ENCODE measurements at regions of chr4 and their contacts with region 1.

Region 1: GRCh38 chr4:55395529-55396307 is at the start of gene TMEM165:
- DNase-seq: peak; percentile 77 to 92 (median 87)
- ATAC-seq: peak; percentile 94
- H3K4me3 ChIP-seq: peak within 1 kb of the TSS; percentile 88
- H3K4me3 Mint-ChIP-seq: peak within 1 kb of the TSS; percentile 94 to 99 (median 96)
- H3K27ac ChIP-seq: peak within 1 kb of the TSS; percentile 89
- H3K27ac Mint-ChIP-seq: peak within 1 kb of the TSS; percentile 89 to 99 (median 96)
- H3K4me1 ChIP-seq: peaks cover 27 to 31% of the 10 kb centered on the region in 2 donors
- H3K4me1 Mint-ChIP-seq: peaks cover 29 to 49% (median 39%) of the 10 kb centered on the region in 7 donors
- H3K27me3 ChIP-seq: no peaks in the 10 kb centered on the region
- H3K27me3 Mint-ChIP-seq: no peaks in the 10 kb centered on the region
- total RNA-seq, gene TMEM165: 53.1 to 80.9 (median 58.9) TPM

Region 2: GRCh38 chr4:54064295-54065111 is 1331.2 kb before region 1 on chr4 and contains the start of gene CHIC2:
- CTCF ChIA-PET with region 1: no interaction called
- POLR2A ChIA-PET with region 1: no interaction called
- intact Hi-C with region 1: loop called in 1 of 2 experiments (anchors 5 kb)
- DNase-seq: peak; percentile 95 to 99 (median 98)
- ATAC-seq: peak; percentile 94
- H3K4me3 ChIP-seq: peak within 1 kb of the TSS; percentile 77
- H3K4me3 Mint-ChIP-seq: peak within 1 kb of the TSS; percentile 94 to 100 (median 97)
- H3K27ac ChIP-seq: peak within 1 kb of the TSS; percentile 100
- H3K27ac Mint-ChIP-seq: peak within 1 kb of the TSS; percentile 95 to 99 (median 98)
- H3K4me1 ChIP-seq: peaks cover 8 to 32% of the 10 kb centered on the region in 2 donors
- H3K4me1 Mint-ChIP-seq: peaks cover 39 to 59% (median 44%) of the 10 kb centered on the region in 7 donors
- H3K27me3 ChIP-seq: no peaks in the 10 kb centered on the region
- H3K27me3 Mint-ChIP-seq: peaks cover 0 to 2% (median 0%) of the 10 kb centered on the region in 5 donors
- total RNA-seq, gene CHIC2: 22.4 to 55.7 (median 40.7) TPM

Region 3: GRCh38 chr4:55352726-55353125 is 43.0 kb before region 1 on chr4:
- CTCF ChIA-PET with region 1: no interaction called
- POLR2A ChIA-PET with region 1: no interaction called
- intact Hi-C with region 1: no loop called
- DNase-seq: no peak
- ATAC-seq: no peak
- H3K4me3 ChIP-seq: no peak overlapping the region
- H3K4me3 Mint-ChIP-seq: no peak overlapping the region
- H3K27ac ChIP-seq: no peak overlapping the region
- H3K27ac Mint-ChIP-seq: no peak overlapping the region
- H3K4me1 ChIP-seq: no peaks in the 10 kb centered on the region
- H3K4me1 Mint-ChIP-seq: peaks cover 0 to 7% (median 6%) of the 10 kb centered on the region in 7 donors
- H3K27me3 ChIP-seq: no peaks in the 10 kb centered on the region
- H3K27me3 Mint-ChIP-seq: no peaks in the 10 kb centered on the region

Region 4: DNA sequence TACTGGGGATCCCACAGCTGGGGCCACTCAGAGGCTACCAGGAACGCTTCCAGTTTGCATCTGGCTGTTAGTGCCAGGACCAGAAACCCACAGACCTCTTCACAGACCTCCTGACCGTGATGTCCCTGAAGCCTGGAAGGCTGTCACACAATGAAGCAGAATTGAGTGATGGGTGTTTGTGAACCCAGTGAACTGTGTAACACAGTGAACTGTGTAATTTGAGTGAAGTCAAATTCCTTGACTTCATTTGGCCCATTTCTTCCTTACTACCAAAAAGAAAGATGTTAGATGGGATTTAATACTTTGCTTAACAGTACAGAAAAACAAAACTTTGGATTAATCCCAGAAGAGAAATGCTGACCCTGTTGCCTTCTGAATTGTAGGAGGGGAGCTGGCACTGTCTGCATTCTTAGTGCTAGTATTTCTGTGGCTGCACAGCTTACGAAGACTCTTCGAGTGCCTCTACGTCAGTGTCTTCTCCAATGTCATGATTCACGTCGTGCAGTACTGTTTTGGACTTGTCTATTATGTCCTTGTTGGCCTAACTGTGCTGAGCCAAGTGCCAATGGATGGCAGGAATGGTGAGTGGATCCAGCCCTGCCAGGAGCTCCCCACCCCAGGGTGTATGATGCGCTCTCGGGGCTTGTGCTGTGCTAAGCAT is 31.9 kb before region 1 on chr4:
- CTCF ChIA-PET with region 1: no interaction called
- POLR2A ChIA-PET with region 1: no interaction called
- intact Hi-C with region 1: loop called in 1 of 2 experiments (anchors 5 kb)
- DNase-seq: no peak
- ATAC-seq: no peak
- H3K4me3 ChIP-seq: no peak overlapping the region
- H3K4me3 Mint-ChIP-seq: no peak overlapping the region
- H3K27ac ChIP-seq: no peak overlapping the region
- H3K27ac Mint-ChIP-seq: no peak overlapping the region
- H3K4me1 ChIP-seq: no peaks in the 10 kb centered on the region
- H3K4me1 Mint-ChIP-seq: peaks cover 0 to 8% (median 0%) of the 10 kb centered on the region in 7 donors
- H3K27me3 ChIP-seq: no peaks in the 10 kb centered on the region
- H3K27me3 Mint-ChIP-seq: no peaks in the 10 kb centered on the region

Region 5: GRCh38 chr4:55546756-55547465 is 151.2 kb after region 1 on chr4 and contains the start of gene CLOCK:
- CTCF ChIA-PET with region 1: no interaction called
- POLR2A ChIA-PET with region 1: interaction called, 13 read pairs
- intact Hi-C with region 1: loop called (anchors 1 kb)
- DNase-seq: peak; percentile 79 to 87 (median 83)
- ATAC-seq: peak; percentile 82
- H3K4me3 ChIP-seq: peak within 1 kb of the TSS; percentile 82
- H3K4me3 Mint-ChIP-seq: peak within 1 kb of the TSS; percentile 88 to 96 (median 94)
- H3K27ac ChIP-seq: peak within 1 kb of the TSS; percentile 84
- H3K27ac Mint-ChIP-seq: peak within 1 kb of the TSS; percentile 87 to 92 (median 90)
- H3K4me1 ChIP-seq: peaks cover 5 to 8% of the 10 kb centered on the region in 2 donors
- H3K4me1 Mint-ChIP-seq: peaks cover 21 to 57% (median 40%) of the 10 kb centered on the region in 7 donors
- H3K27me3 ChIP-seq: no peaks in the 10 kb centered on the region
- H3K27me3 Mint-ChIP-seq: peaks cover 0 to 29% (median 0%) of the 10 kb centered on the region in 5 donors
- total RNA-seq, gene CLOCK: 7.9 to 12.6 (median 8.9) TPM

Region 6: GRCh38 chr4:56048702-56049431 is 653.1 kb after region 1 on chr4:
- CTCF ChIA-PET with region 1: no interaction called
- POLR2A ChIA-PET with region 1: no interaction called
- intact Hi-C with region 1: loop called in 1 of 2 experiments (anchors 5 kb)
- DNase-seq: peak in 6 of 9 donors; percentile 7 to 72 (median 16)
- ATAC-seq: peak; percentile 85
- H3K4me3 ChIP-seq: no peak overlapping the region
- H3K4me3 Mint-ChIP-seq: peak overlapping the region; percentile 55 to 78 (median 73)
- H3K27ac ChIP-seq: no peak overlapping the region
- H3K27ac Mint-ChIP-seq: no peak overlapping the region
- H3K4me1 ChIP-seq: peaks cover 3 to 6% of the 10 kb centered on the region in 2 donors
- H3K4me1 Mint-ChIP-seq: peaks cover 8 to 18% (median 12%) of the 10 kb centered on the region in 7 donors
- H3K27me3 ChIP-seq: peaks cover 6 to 10% of the 10 kb centered on the region in 2 donors
- H3K27me3 Mint-ChIP-seq: peaks cover 43 to 64% (median 55%) of the 10 kb centered on the region in 5 donors

Region 7: DNA sequence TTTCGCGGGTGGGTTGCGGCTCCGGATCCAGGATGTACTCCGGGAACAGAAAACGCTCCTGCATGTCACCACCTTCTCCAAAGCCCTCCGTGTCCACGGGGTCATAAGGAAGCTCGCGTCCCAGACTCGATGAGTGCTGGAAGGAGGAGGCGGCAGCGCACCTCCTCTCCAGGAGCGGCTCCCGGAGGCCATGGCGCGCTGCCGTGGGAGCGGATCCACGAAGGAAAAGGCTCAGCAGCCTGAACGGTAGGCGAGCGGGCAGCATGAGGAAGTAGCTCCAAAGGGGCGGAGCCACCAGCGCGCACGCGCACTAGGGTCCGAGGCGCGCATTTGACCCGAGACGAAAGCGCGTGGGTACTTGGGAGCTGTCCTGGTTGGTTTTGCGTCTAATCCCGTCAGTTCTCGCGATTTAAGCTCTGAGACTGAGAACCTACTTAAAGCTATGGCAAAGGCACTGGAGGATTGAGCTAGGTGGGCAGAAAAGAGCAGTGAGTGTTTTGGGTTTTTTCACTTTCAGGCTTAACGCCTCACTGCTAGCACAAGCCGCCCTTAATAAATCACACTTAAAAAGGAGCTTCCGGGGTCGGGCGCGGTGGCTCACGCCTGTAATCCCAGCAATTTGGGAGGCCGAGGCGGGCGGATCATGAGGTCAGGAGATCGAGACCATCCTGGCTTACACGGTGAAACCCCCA is 1581.7 kb after region 1 on chr4 and contains the start of gene NOA1:
- CTCF ChIA-PET with region 1: no interaction called
- POLR2A ChIA-PET with region 1: no interaction called
- intact Hi-C with region 1: loop called (anchors 1 to 5 kb)
- DNase-seq: peak; percentile 98 to 99 (median 99)
- ATAC-seq: peak; percentile 86
- H3K4me3 ChIP-seq: peak within 1 kb of the TSS; percentile 80
- H3K4me3 Mint-ChIP-seq: peak within 1 kb of the TSS; percentile 92 to 100 (median 98)
- H3K27ac ChIP-seq: peak within 1 kb of the TSS; percentile 82
- H3K27ac Mint-ChIP-seq: peak within 1 kb of the TSS; percentile 94 to 100 (median 98)
- H3K4me1 ChIP-seq: peaks cover 36 to 38% of the 10 kb centered on the region in 2 donors
- H3K4me1 Mint-ChIP-seq: peaks cover 41 to 70% (median 52%) of the 10 kb centered on the region in 7 donors
- H3K27me3 ChIP-seq: no peaks in the 10 kb centered on the region
- H3K27me3 Mint-ChIP-seq: peaks cover 0 to 2% (median 0%) of the 10 kb centered on the region in 5 donors
- total RNA-seq, gene NOA1: 13.6 to 23.0 (median 20.9) TPM